ENCODE measurements at regions of chr7 and their contacts with region 1.

Region 1: GRCh38 chr7:2844165-2844898 is at the start of gene GNA12:
- DNase-seq: peak; percentile 95
- ATAC-seq: peak; percentile 96
- H3K4me3 ChIP-seq: peak within 1 kb of the TSS; percentile 52 to 83
- H3K27ac ChIP-seq: peak within 1 kb of the TSS; percentile 92
- H3K4me1 ChIP-seq: peaks cover 27% of the 10 kb centered on the region
- H3K27me3 ChIP-seq: no peaks in the 10 kb centered on the region
- CTCF ChIP-seq: no peak
- total RNA-seq, gene GNA12: 139 TPM

Region 2: DNA sequence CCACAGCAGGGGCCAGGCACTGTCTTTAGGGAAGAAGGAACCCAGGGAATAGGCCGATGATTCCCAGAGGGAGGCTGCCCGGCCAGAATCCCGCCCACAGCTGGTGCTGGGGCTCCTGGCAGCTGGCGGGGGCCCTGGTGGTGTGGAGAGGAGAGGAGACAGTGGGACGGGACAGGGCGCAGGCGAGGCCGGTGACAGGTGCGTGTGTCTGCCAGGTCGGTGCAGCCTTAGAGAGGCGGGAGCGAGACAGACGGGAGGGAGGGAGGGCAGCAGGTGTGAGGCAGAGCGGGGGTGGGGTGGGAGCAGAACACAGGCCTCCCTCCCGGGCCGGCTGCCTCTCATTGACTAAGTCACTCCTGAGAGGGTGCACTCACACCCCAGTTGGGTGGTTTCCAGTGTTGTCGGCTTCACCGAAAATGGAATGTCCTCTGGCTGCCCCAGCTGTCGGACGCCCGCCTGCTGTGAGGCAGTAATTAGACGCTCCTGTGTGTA is 1119.1 kb before region 1 on chr7:
- CTCF ChIA-PET with region 1: no interaction called
- POLR2A ChIA-PET with region 1: no interaction called
- in situ Hi-C with region 1: no loop called
- intact Hi-C with region 1: no loop called
- DNase-seq: no peak
- ATAC-seq: peak; percentile 36; the same call in 1 of the 2 replicates
- H3K4me3 ChIP-seq: no peak overlapping the region
- H3K27ac ChIP-seq: no peak overlapping the region
- H3K4me1 ChIP-seq: peaks cover 3% of the 10 kb centered on the region; the same call in 1 of the 2 replicates
- H3K27me3 ChIP-seq: no peaks in the 10 kb centered on the region
- CTCF ChIP-seq: no peak

Region 3: GRCh38 chr7:2707509-2707908 is 136.8 kb before region 1 on chr7:
- CTCF ChIA-PET with region 1: interaction called, 13 read pairs
- POLR2A ChIA-PET with region 1: no interaction called
- in situ Hi-C with region 1: no loop called
- intact Hi-C with region 1: no loop called
- DNase-seq: no peak
- ATAC-seq: no peak
- H3K4me3 ChIP-seq: no peak overlapping the region
- H3K27ac ChIP-seq: no peak overlapping the region
- H3K4me1 ChIP-seq: peaks cover 3% of the 10 kb centered on the region; the same call in 1 of the 2 replicates
- H3K27me3 ChIP-seq: no peaks in the 10 kb centered on the region
- CTCF ChIP-seq: no peak

Region 4: GRCh38 chr7:2831015-2831414 is 13.3 kb before region 1 on chr7:
- CTCF ChIA-PET with region 1: no interaction called
- POLR2A ChIA-PET with region 1: interaction called, 10 read pairs
- in situ Hi-C with region 1: no loop called
- intact Hi-C with region 1: no loop called
- DNase-seq: no peak
- ATAC-seq: no peak
- H3K4me3 ChIP-seq: no peak overlapping the region
- H3K27ac ChIP-seq: no peak overlapping the region
- H3K4me1 ChIP-seq: peaks cover 9% of the 10 kb centered on the region; the same call in 1 of the 2 replicates
- H3K27me3 ChIP-seq: no peaks in the 10 kb centered on the region
- CTCF ChIP-seq: no peak